CD4-positive, alpha-beta memory T cell (primary cell): ENCODE measurements at regions of chr22 and their contacts with region 1.

Region 1: DNA sequence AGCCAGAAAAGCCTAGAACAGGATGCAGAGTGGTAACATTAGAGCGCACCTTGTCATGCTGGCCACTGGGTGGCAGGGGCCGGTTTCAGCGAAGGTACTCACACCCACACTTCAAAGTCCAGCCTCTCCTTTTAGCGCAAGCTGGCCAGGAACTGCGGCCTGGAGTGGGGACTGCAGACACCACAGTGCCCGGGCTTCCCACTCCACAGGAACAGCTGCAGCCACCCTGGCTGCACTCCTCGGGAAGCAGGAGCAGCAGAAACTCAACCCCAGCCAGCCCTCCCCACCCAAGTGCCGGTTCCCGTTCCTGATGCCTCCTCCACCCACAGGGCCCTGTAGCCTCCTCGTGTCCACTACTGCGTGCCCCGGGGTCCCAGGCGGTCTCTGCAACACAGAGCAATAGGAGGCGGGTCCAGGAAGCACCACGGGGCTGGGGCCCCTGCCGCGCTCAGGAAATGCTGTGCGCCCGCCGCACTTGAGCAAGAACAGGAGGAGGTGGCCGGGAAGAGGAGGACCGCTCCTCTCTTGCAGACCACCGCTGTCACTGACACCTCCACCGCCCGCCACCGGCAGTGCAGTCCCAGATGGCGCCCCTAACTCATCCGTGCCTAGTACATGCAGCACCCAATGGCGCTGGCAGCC is 2.2 kb downstream of the RFPL2 start:
- DNase-seq: peak; percentile 32 to 56 (median 38)
- H3K4me3 ChIP-seq: peak overlapping the region; percentile 44 to 52
- H3K4me3 Mint-ChIP-seq: peak overlapping the region; percentile 81 to 93 (median 88)
- H3K27ac ChIP-seq: peak overlapping the region; percentile 15
- H3K27ac Mint-ChIP-seq: peak overlapping the region in 5 of 7 donors; percentile 50 to 95 (median 74)
- H3K4me1 ChIP-seq: peaks cover 64% of the 10 kb centered on the region
- H3K4me1 Mint-ChIP-seq: peaks cover 29 to 86% (median 62%) of the 10 kb centered on the region in 4 donors
- H3K27me3 ChIP-seq: no peaks in the 10 kb centered on the region
- H3K27me3 Mint-ChIP-seq: peaks cover 0 to 2% of the 10 kb centered on the region in 2 donors

Region 2: DNA sequence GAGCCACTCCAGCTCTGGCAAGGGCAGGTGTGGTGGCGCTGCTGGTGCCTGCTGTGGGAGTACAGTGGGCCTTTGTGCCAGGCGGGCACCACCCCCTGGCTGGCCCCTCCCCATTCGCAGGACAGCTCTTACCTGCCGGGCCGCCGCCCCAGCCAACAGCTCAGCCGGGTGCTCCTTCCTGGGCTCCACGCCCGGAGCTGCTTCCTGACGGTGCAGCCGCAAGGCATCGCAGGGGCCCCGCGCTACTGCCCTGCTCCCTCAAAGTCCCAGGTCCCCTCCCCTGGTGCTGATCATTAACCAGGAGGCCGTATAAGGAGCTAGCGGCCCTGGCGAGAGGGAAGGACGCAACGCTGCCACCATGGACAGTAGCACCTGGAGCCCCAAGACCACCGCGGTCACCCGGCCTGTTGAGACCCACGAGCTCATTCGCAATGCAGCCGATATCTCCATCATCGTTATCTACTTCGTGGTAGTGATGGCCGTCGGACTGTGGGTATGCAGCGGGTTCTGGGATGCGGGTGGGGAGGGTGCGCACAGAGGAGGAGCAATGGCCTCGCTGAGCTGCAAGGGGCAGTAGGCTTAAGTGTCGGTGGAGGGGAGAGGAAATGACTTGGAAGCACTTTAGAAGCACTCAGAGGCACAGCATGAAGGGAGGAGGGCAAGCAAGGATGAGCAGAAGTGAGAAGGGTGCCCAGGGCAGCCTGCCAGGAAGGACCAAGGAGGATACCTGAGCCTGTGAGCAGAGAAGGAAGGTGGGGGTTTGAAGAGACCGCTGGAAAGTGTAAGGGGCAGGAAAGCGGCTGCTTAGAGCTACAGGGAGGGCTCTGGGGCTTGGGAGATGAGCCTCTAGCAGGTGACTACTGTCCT is 159.5 kb before region 1 on chr22 and contains the start of gene SLC5A1:
- CTCF ChIA-PET with region 1: no interaction called
- POLR2A ChIA-PET with region 1: no interaction called
- intact Hi-C with region 1: no loop called
- DNase-seq: no peak
- H3K4me3 ChIP-seq: no peak within 1 kb of the TSS
- H3K4me3 Mint-ChIP-seq: no peak within 1 kb of the TSS
- H3K27ac ChIP-seq: no peak within 1 kb of the TSS
- H3K27ac Mint-ChIP-seq: no peak within 1 kb of the TSS
- H3K4me1 ChIP-seq: no peaks in the 10 kb centered on the region
- H3K4me1 Mint-ChIP-seq: peaks cover 0 to 1% (median 0%) of the 10 kb centered on the region in 4 donors
- H3K27me3 ChIP-seq: peaks cover 5% of the 10 kb centered on the region
- H3K27me3 Mint-ChIP-seq: peaks cover 34 to 36% of the 10 kb centered on the region in 2 donors
- total RNA-seq, gene SLC5A1: not detected

Region 3: GRCh38 chr22:32103658-32104315 is 98.9 kb before region 1 on chr22:
- CTCF ChIA-PET with region 1: interaction called, 4 read pairs
- POLR2A ChIA-PET with region 1: no interaction called
- intact Hi-C with region 1: loop called (anchors 1 kb)
- DNase-seq: peak in 4 of 5 donors; percentile 32 to 38 (median 36)
- H3K4me3 ChIP-seq: no peak overlapping the region
- H3K4me3 Mint-ChIP-seq: no peak overlapping the region
- H3K27ac ChIP-seq: no peak overlapping the region
- H3K27ac Mint-ChIP-seq: no peak overlapping the region
- H3K4me1 ChIP-seq: no peaks in the 10 kb centered on the region
- H3K4me1 Mint-ChIP-seq: no peaks in the 10 kb centered on the region
- H3K27me3 ChIP-seq: no peaks in the 10 kb centered on the region
- H3K27me3 Mint-ChIP-seq: peaks cover 13 to 14% of the 10 kb centered on the region in 2 donors

Region 4: GRCh38 chr22:32144496-32145274 is 58.0 kb before region 1 on chr22:
- CTCF ChIA-PET with region 1: interaction called, 8 read pairs
- POLR2A ChIA-PET with region 1: no interaction called
- intact Hi-C with region 1: loop called (anchors 2 kb)
- DNase-seq: peak in 1 of 5 donors; percentile 12
- H3K4me3 ChIP-seq: no peak overlapping the region
- H3K4me3 Mint-ChIP-seq: peak overlapping the region in 5 of 8 donors; percentile 10 to 60 (median 29)
- H3K27ac ChIP-seq: no peak overlapping the region
- H3K27ac Mint-ChIP-seq: peak overlapping the region; percentile 7 to 88 (median 60)
- H3K4me1 ChIP-seq: peaks cover 40% of the 10 kb centered on the region
- H3K4me1 Mint-ChIP-seq: peaks cover 31 to 47% (median 39%) of the 10 kb centered on the region in 4 donors
- H3K27me3 ChIP-seq: no peaks in the 10 kb centered on the region
- H3K27me3 Mint-ChIP-seq: no peaks in the 10 kb centered on the region

Region 5: DNA sequence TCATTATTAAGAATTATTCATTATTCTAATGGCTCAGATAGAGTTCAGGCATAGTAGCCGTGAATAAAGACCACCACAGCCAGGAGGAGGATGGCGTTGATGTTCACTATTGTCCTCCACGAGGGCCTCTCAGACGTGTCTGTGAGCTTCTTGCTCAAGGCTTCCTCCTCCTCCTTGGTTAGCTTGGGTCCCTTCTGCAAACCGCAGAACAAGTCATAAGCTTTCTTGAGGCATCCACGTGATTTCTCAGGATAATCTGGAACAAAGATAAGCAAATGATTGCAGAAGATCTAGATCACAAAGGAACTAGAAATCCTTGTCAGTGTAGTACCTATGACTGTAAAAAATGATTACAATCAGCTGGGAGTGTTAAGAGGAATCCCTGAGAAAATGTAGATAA is 15.8 kb after region 1 on chr22:
- CTCF ChIA-PET with region 1: interaction called, 10 read pairs
- POLR2A ChIA-PET with region 1: no interaction called
- intact Hi-C with region 1: no loop called
- DNase-seq: no peak
- H3K4me3 ChIP-seq: no peak overlapping the region
- H3K4me3 Mint-ChIP-seq: no peak overlapping the region
- H3K27ac ChIP-seq: no peak overlapping the region
- H3K27ac Mint-ChIP-seq: no peak overlapping the region
- H3K4me1 ChIP-seq: no peaks in the 10 kb centered on the region
- H3K4me1 Mint-ChIP-seq: no peaks in the 10 kb centered on the region
- H3K27me3 ChIP-seq: no peaks in the 10 kb centered on the region
- H3K27me3 Mint-ChIP-seq: peaks cover 2 to 4% of the 10 kb centered on the region in 2 donors

Region 6: GRCh38 chr22:32421484-32421883 is 218.8 kb after region 1 on chr22:
- CTCF ChIA-PET with region 1: no interaction called
- POLR2A ChIA-PET with region 1: no interaction called
- intact Hi-C with region 1: no loop called
- DNase-seq: no peak
- H3K4me3 ChIP-seq: no peak overlapping the region
- H3K4me3 Mint-ChIP-seq: no peak overlapping the region
- H3K27ac ChIP-seq: no peak overlapping the region
- H3K27ac Mint-ChIP-seq: peak overlapping the region in 1 of 7 donors; percentile 37
- H3K4me1 ChIP-seq: no peaks in the 10 kb centered on the region
- H3K4me1 Mint-ChIP-seq: no peaks in the 10 kb centered on the region
- H3K27me3 ChIP-seq: peaks cover 8% of the 10 kb centered on the region
- H3K27me3 Mint-ChIP-seq: peaks cover 28 to 32% of the 10 kb centered on the region in 2 donors